Endothelial cell of umbilical vein (primary cell): ENCODE measurements at regions of chr16 and their contacts with region 1.

Region 1: DNA sequence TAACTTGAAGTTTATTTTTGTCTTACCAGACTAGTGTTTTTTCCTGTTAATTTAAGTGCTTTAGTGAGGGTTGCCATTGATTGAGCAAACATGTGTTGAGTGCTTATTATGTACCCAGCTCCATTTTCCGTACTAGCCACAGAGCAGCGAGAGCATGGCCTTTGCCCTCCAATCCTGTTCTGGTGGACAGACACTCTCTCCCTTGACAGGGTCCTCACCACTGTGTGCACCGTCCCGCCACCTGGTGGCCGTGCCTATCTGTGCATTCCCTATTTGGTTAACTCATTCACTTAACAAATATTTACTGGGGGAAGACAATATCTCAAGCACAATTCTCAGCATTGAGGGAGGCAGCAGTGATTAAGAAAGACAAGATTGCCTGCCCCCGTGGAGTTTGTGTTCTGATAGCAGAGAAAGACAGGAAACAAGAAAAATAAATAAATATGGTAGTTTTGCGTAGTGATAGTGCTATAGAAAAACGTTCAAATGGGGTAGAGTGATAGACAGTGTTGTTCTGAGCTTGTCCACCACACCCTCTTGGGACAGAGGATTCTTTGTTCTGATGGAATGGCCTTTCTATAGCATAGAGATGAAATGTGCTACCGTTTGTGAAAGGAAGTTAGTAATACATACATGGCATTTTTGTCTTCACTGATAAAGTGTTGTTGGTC is 13.0 kb downstream of the CDH13 start:
- DNase-seq: peak; percentile 85
- H3K4me3 ChIP-seq: no peak overlapping the region
- H3K27ac ChIP-seq: peak overlapping the region; percentile 99
- H3K4me1 ChIP-seq: peaks cover 56% of the 10 kb centered on the region
- H3K27me3 ChIP-seq: no peaks in the 10 kb centered on the region
- CTCF ChIP-seq: peak; percentile 80 to 82
- POLR2A ChIP-seq: no peak

Region 2: DNA sequence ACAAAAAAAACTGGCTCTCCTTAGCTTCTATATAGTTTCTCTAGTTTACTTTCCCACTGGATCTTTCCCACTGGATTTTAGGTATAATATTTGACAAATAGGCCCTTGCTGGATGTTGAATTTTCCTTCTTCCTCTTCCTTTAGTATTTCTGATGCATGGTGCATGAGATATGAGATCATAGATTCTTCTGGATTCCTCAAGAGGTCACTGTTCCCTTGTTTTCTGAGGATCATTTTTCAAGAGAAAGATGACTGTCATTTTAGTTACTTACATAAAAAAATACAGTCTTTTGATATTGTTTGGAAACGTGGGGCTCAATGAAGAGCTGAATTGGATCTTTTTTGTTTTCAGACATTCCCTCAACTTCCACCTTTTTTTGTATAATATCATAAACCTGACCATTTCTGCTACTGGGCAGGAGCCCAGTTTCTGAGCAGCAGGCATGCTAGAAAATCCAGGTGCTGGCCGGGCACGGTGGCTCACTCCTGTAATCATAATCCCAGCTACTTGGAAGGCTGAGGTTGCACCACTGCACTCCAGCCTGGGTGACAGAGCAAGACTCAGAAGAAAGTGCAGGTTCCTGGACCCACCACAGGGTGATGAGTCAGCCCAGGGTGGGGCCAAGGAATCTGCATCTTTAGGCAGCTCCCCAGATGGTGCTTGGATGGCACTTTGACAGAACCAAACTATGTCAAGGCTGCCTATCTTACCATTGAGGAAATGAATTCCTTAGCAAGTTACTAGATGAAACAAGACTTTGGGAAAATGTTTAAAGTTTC is 698.8 kb before region 1 on chr16:
- CTCF ChIA-PET with region 1: no interaction called
- POLR2A ChIA-PET with region 1: no interaction called
- dilution Hi-C with region 1: no loop called
- intact Hi-C with region 1: no loop called
- DNase-seq: peak; percentile 70
- H3K4me3 ChIP-seq: no peak overlapping the region
- H3K27ac ChIP-seq: no peak overlapping the region
- H3K4me1 ChIP-seq: no peaks in the 10 kb centered on the region
- H3K27me3 ChIP-seq: no peaks in the 10 kb centered on the region
- CTCF ChIP-seq: peak; percentile 37 to 47
- POLR2A ChIP-seq: no peak

Region 3: GRCh38 chr16:82509691-82510430 is 129.9 kb before region 1 on chr16:
- CTCF ChIA-PET with region 1: no interaction called
- POLR2A ChIA-PET with region 1: no interaction called
- dilution Hi-C with region 1: no loop called
- intact Hi-C with region 1: no loop called
- DNase-seq: no peak
- H3K4me3 ChIP-seq: no peak overlapping the region
- H3K27ac ChIP-seq: no peak overlapping the region
- H3K4me1 ChIP-seq: no peaks in the 10 kb centered on the region
- H3K27me3 ChIP-seq: peaks cover 2 to 4% of the 10 kb centered on the region in 2 experiments
- CTCF ChIP-seq: no peak
- POLR2A ChIP-seq: no peak

Region 4: DNA sequence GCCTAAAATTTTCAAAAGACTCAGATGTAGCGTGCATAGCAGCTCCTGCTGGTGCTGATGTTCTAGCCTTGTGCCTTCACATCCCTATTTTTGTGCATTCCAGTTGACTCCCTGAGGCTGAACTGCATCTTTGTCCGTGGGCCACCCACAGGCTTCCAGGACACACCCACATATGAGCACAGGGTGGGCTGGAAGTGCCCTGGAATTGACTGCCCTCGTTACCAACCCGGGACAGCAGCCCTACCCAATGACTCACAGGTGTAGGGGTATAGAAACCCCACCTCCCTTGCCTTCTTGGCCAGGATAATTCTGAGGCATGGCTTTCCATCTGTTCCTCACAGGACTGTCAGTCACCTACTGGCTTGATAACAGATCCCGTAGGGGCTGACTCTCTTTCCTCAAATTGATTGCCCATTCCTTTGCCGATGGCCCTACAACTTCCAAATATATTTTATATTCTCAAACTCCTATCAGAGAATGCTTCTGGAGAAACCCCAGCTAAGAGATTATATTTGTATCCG is 78.9 kb before region 1 on chr16:
- CTCF ChIA-PET with region 1: no interaction called
- POLR2A ChIA-PET with region 1: no interaction called
- dilution Hi-C with region 1: no loop called
- intact Hi-C with region 1: no loop called
- DNase-seq: no peak
- H3K4me3 ChIP-seq: no peak overlapping the region
- H3K27ac ChIP-seq: no peak overlapping the region
- H3K4me1 ChIP-seq: no peaks in the 10 kb centered on the region
- H3K27me3 ChIP-seq: peaks cover 0 to 2% of the 10 kb centered on the region in 2 experiments
- CTCF ChIP-seq: no peak
- POLR2A ChIP-seq: no peak

Region 5: GRCh38 chr16:82603784-82604411 is 35.9 kb before region 1 on chr16:
- CTCF ChIA-PET with region 1: interaction called, 12 read pairs
- POLR2A ChIA-PET with region 1: no interaction called
- dilution Hi-C with region 1: no loop called
- intact Hi-C with region 1: loop called (anchors 1 kb)
- DNase-seq: peak; percentile 68
- H3K4me3 ChIP-seq: no peak overlapping the region
- H3K27ac ChIP-seq: no peak overlapping the region
- H3K4me1 ChIP-seq: no peaks in the 10 kb centered on the region
- H3K27me3 ChIP-seq: peaks cover 2 to 4% of the 10 kb centered on the region in 2 experiments
- CTCF ChIP-seq: peak; percentile 61 to 80
- POLR2A ChIP-seq: no peak

Region 6: GRCh38 chr16:82671741-82672140 is 31.9 kb after region 1 on chr16:
- CTCF ChIA-PET with region 1: interaction called, 3 read pairs
- POLR2A ChIA-PET with region 1: no interaction called
- dilution Hi-C with region 1: no loop called
- intact Hi-C with region 1: loop called (anchors 1 kb)
- DNase-seq: no peak
- H3K4me3 ChIP-seq: no peak overlapping the region
- H3K27ac ChIP-seq: no peak overlapping the region
- H3K4me1 ChIP-seq: no peaks in the 10 kb centered on the region
- H3K27me3 ChIP-seq: no peaks in the 10 kb centered on the region
- CTCF ChIP-seq: peak; percentile 34 to 40
- POLR2A ChIP-seq: no peak

Region 7: GRCh38 chr16:82755569-82756282 is 115.9 kb after region 1 on chr16:
- CTCF ChIA-PET with region 1: interaction called, 11 read pairs
- POLR2A ChIA-PET with region 1: no interaction called
- dilution Hi-C with region 1: no loop called
- intact Hi-C with region 1: loop called (anchors 1 kb)
- DNase-seq: no peak
- H3K4me3 ChIP-seq: no peak overlapping the region
- H3K27ac ChIP-seq: peak overlapping the region; percentile 92
- H3K4me1 ChIP-seq: peaks cover 59% of the 10 kb centered on the region
- H3K27me3 ChIP-seq: no peaks in the 10 kb centered on the region
- CTCF ChIP-seq: peak in 1 of 2 donors; percentile 7
- POLR2A ChIP-seq: no peak

Region 8: DNA sequence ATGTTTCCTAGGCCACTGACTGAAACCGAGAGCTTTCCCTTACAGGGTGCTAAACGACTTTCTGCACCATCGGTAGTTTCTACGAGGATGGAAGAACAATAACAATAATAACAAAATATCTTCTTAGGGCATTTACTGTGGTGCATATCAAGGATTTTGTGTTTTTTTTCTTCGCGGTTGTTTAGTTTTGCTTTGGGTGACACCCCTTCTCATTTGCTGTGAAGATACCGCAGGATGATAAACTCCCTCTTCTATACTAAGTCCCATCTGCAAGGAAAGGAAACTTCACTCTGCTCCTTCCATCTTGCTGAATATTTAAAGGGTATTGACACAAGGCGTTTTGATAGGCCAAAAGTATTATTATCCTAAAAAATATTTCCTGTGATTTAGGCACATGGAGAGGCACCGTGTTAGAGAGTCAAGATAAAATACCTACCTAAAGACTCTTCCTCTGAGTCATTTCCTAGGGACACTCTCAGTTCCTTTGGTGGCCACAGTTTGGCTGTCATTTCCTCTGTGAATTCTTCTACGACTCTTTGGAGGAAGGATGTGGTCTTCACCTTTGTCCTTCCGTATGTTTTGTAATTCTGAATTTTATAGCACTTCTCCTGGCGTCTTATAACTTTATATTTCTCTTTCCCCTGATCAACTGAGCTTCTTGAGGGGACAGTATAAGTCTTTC is 305.8 kb after region 1 on chr16:
- CTCF ChIA-PET with region 1: no interaction called
- POLR2A ChIA-PET with region 1: no interaction called
- dilution Hi-C with region 1: no loop called
- intact Hi-C with region 1: loop called (anchors 1 kb)
- DNase-seq: peak; percentile 69
- H3K4me3 ChIP-seq: no peak overlapping the region
- H3K27ac ChIP-seq: peak overlapping the region; percentile 80
- H3K4me1 ChIP-seq: peaks cover 30% of the 10 kb centered on the region
- H3K27me3 ChIP-seq: no peaks in the 10 kb centered on the region
- CTCF ChIP-seq: no peak
- POLR2A ChIP-seq: peak; percentile 47

Region 9: DNA sequence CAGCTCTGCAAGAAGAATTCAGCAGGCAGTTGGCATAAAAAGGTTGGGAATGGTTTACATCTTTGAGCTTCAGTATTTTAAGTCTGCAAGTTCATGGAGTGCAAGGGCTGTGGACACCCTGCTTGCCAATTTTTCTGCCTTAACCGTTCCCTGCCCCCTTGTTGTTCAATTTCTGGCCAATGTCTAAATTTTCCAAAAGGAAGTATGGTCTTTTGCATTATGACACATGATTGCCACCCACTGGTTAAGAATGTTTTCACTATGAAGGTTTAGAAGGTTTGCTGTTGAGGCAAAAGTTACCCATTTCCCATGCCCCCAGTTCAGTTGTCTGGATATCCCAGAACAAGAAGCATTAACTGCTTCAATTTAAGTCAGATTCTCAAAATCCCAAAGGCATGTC is 428.9 kb after region 1 on chr16:
- CTCF ChIA-PET with region 1: interaction called, 6 read pairs
- POLR2A ChIA-PET with region 1: no interaction called
- dilution Hi-C with region 1: no loop called
- intact Hi-C with region 1: loop called (anchors 1 kb)
- DNase-seq: peak; percentile 91
- H3K4me3 ChIP-seq: no peak overlapping the region
- H3K27ac ChIP-seq: no peak overlapping the region
- H3K4me1 ChIP-seq: peaks cover 36% of the 10 kb centered on the region
- H3K27me3 ChIP-seq: no peaks in the 10 kb centered on the region
- CTCF ChIP-seq: peak; percentile 34 to 35
- POLR2A ChIP-seq: no peak